Activated CD4-positive, alpha-beta T cell treated with anti-CD3 and anti-CD28 coated beads for 36 hours (primary cell): ENCODE measurements at regions of chr15 and their contacts with region 1.

Region 1: GRCh38 chr15:48992545-48992944 is 28.8 kb upstream of the SHC4 start:
- DNase-seq: no peak
- ATAC-seq: no peak
- H3K4me3 Mint-ChIP-seq: no peak overlapping the region
- H3K27ac Mint-ChIP-seq: no peak overlapping the region
- H3K4me1 Mint-ChIP-seq: no peaks in the 10 kb centered on the region
- H3K27me3 Mint-ChIP-seq: no peaks in the 10 kb centered on the region

Region 2: GRCh38 chr15:48898083-48898845 is 94.3 kb before region 1 on chr15:
- CTCF ChIA-PET with region 1: no interaction called
- POLR2A ChIA-PET with region 1: no interaction called
- intact Hi-C with region 1: no loop called
- DNase-seq: no peak
- ATAC-seq: no peak
- H3K4me3 Mint-ChIP-seq: no peak overlapping the region
- H3K27ac Mint-ChIP-seq: no peak overlapping the region
- H3K4me1 Mint-ChIP-seq: peaks cover 2% of the 10 kb centered on the region
- H3K27me3 Mint-ChIP-seq: peaks cover 28% of the 10 kb centered on the region

Region 3: GRCh38 chr15:48946088-48946839 is 46.3 kb before region 1 on chr15:
- CTCF ChIA-PET with region 1: no interaction called
- POLR2A ChIA-PET with region 1: no interaction called
- intact Hi-C with region 1: loop called in 1 of 2 experiments (anchors 1 kb)
- DNase-seq: no peak
- ATAC-seq: peak; percentile 93
- H3K4me3 Mint-ChIP-seq: no peak overlapping the region
- H3K27ac Mint-ChIP-seq: peak overlapping the region; percentile 7
- H3K4me1 Mint-ChIP-seq: peaks cover 13% of the 10 kb centered on the region
- H3K27me3 Mint-ChIP-seq: peaks cover 20% of the 10 kb centered on the region

Region 4: GRCh38 chr15:50116473-50116872 is 1123.9 kb after region 1 on chr15:
- CTCF ChIA-PET with region 1: no interaction called
- POLR2A ChIA-PET with region 1: no interaction called
- intact Hi-C with region 1: no loop called
- DNase-seq: peak; percentile 33
- ATAC-seq: peak; percentile 61
- H3K4me3 Mint-ChIP-seq: no peak overlapping the region
- H3K27ac Mint-ChIP-seq: no peak overlapping the region
- H3K4me1 Mint-ChIP-seq: peaks cover 11% of the 10 kb centered on the region
- H3K27me3 Mint-ChIP-seq: peaks cover 8% of the 10 kb centered on the region

Region 5: DNA sequence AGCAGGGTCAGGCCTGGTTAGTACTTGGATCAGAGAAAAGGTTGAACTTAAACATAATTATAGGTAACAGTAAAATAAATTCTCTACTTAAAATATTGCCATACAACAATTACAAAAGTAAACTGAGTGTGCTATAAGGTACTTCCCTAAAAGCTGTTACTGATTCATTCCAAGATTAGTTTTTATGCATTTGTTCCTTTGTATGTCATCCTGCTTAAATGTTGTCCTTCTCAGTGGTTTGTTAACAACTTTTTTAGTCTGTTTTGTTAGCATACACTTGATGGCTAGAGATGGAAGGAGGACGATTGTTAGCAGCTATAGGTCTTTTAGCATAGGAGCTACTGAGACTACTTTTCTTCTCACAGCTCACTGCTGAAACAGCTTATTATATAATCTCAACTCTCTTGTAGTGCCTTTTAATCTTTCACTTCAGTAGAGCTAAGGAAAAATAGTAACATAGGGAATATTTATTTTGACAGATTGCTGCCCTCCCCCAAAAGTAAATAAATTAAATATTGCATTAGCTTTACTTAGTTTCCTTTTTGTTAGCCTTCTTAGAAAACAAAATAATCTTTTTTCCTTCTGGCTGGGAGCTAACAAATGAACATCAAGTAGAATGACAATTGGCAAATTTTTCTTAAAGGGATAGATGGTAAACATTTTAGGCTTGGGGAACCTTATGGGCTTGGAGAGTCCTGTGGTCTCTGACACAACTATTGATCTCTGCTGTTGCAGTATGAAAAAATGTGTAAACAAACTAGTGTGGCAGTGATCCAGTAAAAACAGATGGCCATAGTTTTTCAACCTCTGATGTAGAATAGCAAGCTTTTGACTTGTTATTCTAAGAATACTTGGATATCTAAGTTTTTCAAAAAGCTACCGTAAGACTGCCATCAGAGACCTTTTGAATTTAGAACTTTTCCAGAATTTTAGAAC is 1471.1 kb after region 1 on chr15:
- CTCF ChIA-PET with region 1: no interaction called
- POLR2A ChIA-PET with region 1: no interaction called
- intact Hi-C with region 1: no loop called
- DNase-seq: no peak
- ATAC-seq: peak; percentile 83
- H3K4me3 Mint-ChIP-seq: no peak overlapping the region
- H3K27ac Mint-ChIP-seq: peak overlapping the region; percentile 68
- H3K4me1 Mint-ChIP-seq: peaks cover 21% of the 10 kb centered on the region
- H3K27me3 Mint-ChIP-seq: no peaks in the 10 kb centered on the region